ENCODE measurements at regions of chr12 and their contacts with region 1.

Region 1: GRCh38 chr12:69359531-69360347 is at the start of gene YEATS4:
- DNase-seq: peak; percentile 95
- ATAC-seq: peak; percentile 90
- H3K4me3 ChIP-seq: peak within 1 kb of the TSS; percentile 71 to 75 (median 72)
- H3K27ac ChIP-seq: peak within 1 kb of the TSS; percentile 94
- H3K4me1 ChIP-seq: peaks cover 44% of the 10 kb centered on the region
- H3K27me3 ChIP-seq: no peaks in the 10 kb centered on the region
- CTCF ChIP-seq: no peak
- EP300 ChIP-seq: 0 out of 4 replicates have a peak, but pooled peaks of 1 of the 2 experiments have one; percentile 8
- POLR2A ChIP-seq: peak; percentile 76 to 86
- RAD21 ChIP-seq: peak; percentile 39; the same call in 1 of the 2 replicates
- total RNA-seq, gene YEATS4: 45.0 and 51.7 TPM in 2 replicates

Region 2: GRCh38 chr12:68807576-68808387 is 552.0 kb before region 1 on chr12 and contains the start of gene MDM2:
- CTCF ChIA-PET with region 1: no interaction called
- POLR2A ChIA-PET with region 1: no interaction called
- in situ Hi-C with region 1: no loop called
- intact Hi-C with region 1: no loop called
- DNase-seq: peak; percentile 90
- ATAC-seq: peak; percentile 73
- H3K4me3 ChIP-seq: peak within 1 kb of the TSS; percentile 82 to 94 (median 88)
- H3K27ac ChIP-seq: peak within 1 kb of the TSS; percentile 99
- H3K4me1 ChIP-seq: peaks cover 27% of the 10 kb centered on the region
- H3K27me3 ChIP-seq: peaks cover 0 to 5% of the 10 kb centered on the region in 2 experiments; a peak in 1 of 5 replicates
- CTCF ChIP-seq: peak; percentile 86
- EP300 ChIP-seq: peak in 1 of 2 experiments; percentile 40; a peak in 2 of 4 replicates
- POLR2A ChIP-seq: peak; percentile 66 to 80; a peak in 3 of 4 replicates
- RAD21 ChIP-seq: peak; percentile 69
- total RNA-seq, gene MDM2: 314 and 466 TPM in 2 replicates

Region 3: GRCh38 chr12:69290545-69291277 is 69.0 kb before region 1 on chr12:
- CTCF ChIA-PET with region 1: interaction called, 7 read pairs
- POLR2A ChIA-PET with region 1: no interaction called
- in situ Hi-C with region 1: loop called (anchors 10 kb)
- intact Hi-C with region 1: loop called (anchors 1 kb)
- DNase-seq: peak; percentile 82
- ATAC-seq: peak; percentile 99
- H3K4me3 ChIP-seq: no peak overlapping the region
- H3K27ac ChIP-seq: no peak overlapping the region
- H3K4me1 ChIP-seq: peaks cover 11% of the 10 kb centered on the region
- H3K27me3 ChIP-seq: no peaks in the 10 kb centered on the region; a peak in 1 of 5 replicates
- CTCF ChIP-seq: peak; percentile 97
- EP300 ChIP-seq: no peak
- POLR2A ChIP-seq: no peak
- RAD21 ChIP-seq: peak; percentile 92

Region 4: GRCh38 chr12:69348162-69348938 is 11.4 kb before region 1 on chr12 and contains the start of gene LYZ:
- CTCF ChIA-PET with region 1: no interaction called
- POLR2A ChIA-PET with region 1: interaction called, 15 read pairs
- in situ Hi-C with region 1: no loop called
- intact Hi-C with region 1: no loop called
- DNase-seq: peak; percentile 94
- ATAC-seq: peak; percentile 99
- H3K4me3 ChIP-seq: peak within 1 kb of the TSS; percentile 69 to 90 (median 72)
- H3K27ac ChIP-seq: peak within 1 kb of the TSS; percentile 92
- H3K4me1 ChIP-seq: peaks cover 65% of the 10 kb centered on the region
- H3K27me3 ChIP-seq: no peaks in the 10 kb centered on the region; a peak in 1 of 5 replicates
- CTCF ChIP-seq: peak; percentile 24; the same call in 1 of the 2 replicates
- EP300 ChIP-seq: peak in 1 of 2 experiments; percentile 98; a peak in 2 of 4 replicates
- POLR2A ChIP-seq: peak; percentile 84 to 95
- RAD21 ChIP-seq: no peak
- total RNA-seq, gene LYZ: 1,312 and 2,054 TPM in 2 replicates

Region 5: DNA sequence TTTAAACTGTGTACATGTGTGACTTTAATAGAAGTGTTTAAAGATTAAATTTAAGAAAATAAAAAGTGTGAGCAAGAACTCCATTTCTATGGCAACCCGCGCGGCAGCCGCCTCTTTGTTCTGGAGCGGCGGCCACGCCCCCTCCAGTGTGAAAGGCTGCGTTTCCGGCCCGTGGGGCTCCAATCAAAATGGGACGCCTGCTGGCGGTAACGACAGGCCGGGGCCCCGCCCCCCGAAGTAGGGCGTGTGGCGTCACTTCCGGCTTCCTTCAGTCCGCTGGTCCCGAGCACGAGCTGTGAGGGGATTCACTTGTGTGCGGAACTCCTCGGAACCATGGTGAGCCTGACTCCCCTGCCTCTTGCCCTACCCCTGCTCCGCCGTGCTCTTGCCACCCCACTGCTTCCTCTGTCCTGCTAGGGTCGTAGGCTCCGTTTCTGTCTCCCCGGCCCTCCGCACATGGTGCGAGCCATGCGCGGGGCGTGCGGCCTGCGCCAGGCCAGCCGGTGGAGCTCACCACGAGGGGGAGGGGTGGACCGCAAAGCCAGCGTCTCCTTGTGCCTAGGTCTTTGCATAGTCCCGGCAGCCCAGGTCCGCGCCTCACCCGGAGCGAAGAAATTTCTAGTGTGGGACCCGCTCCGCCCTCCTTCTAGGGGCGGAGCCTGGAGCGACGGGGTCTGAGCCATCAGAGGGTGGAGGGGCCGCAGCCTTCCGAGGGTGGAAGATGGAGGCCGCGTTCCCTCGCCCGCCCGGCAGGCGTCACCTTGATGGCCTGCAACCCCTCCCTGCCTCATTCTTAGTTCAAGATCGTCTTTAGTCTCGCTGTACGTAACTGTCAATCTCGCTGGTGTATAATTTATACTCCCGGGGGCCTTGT is 225.7 kb after region 1 on chr12 and contains the start of gene CCT2:
- CTCF ChIA-PET with region 1: no interaction called
- POLR2A ChIA-PET with region 1: no interaction called
- in situ Hi-C with region 1: no loop called
- intact Hi-C with region 1: loop called (anchors 5 kb)
- DNase-seq: peak; percentile 90
- ATAC-seq: peak; percentile 94
- H3K4me3 ChIP-seq: peak within 1 kb of the TSS; percentile 89 to 100 (median 94)
- H3K27ac ChIP-seq: peak within 1 kb of the TSS; percentile 93
- H3K4me1 ChIP-seq: peaks cover 15% of the 10 kb centered on the region
- H3K27me3 ChIP-seq: no peaks in the 10 kb centered on the region; a peak in 1 of 5 replicates
- CTCF ChIP-seq: no peak; the same call in none of the 2 replicates
- EP300 ChIP-seq: no peak
- POLR2A ChIP-seq: peak; percentile 99
- RAD21 ChIP-seq: no peak; the same call in none of the 2 replicates
- total RNA-seq, gene CCT2: 388 and 601 TPM in 2 replicates

Region 6: DNA sequence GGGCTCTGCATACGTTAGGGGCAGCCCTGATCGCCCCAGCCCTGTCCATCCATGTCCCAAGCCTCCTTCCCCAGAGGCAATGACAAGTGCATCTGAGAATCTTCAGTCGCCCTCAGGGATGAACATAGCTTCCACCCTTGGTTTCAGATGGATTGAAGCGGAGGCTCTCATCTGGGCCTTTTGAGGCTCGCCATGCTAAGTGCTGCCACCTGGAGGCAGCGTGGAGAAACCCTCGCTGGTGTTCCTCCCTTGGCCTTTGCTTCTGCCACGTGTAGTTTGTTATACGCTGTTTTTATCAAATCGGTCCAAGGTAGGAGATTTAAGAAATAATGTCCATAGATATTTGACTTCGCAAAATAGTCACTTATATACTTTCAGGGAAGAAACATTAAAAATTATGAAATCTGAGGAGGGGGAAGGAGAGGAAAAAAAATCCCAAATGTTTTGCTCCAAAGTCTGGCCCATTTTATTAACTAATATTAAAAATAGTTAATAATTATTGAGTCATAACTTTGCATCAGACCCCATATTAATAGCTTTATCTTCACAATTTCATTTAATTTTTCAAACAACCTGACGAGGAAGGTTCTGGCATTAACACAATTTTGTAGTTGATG is 279.8 kb after region 1 on chr12:
- CTCF ChIA-PET with region 1: interaction called, 9 read pairs
- POLR2A ChIA-PET with region 1: interaction called, 3 read pairs
- in situ Hi-C with region 1: no loop called
- intact Hi-C with region 1: loop called (anchors 1 kb)
- DNase-seq: peak; percentile 52
- ATAC-seq: peak; percentile 91
- H3K4me3 ChIP-seq: no peak overlapping the region
- H3K27ac ChIP-seq: no peak overlapping the region
- H3K4me1 ChIP-seq: peaks cover 7% of the 10 kb centered on the region; the same call in 1 of the 2 replicates
- H3K27me3 ChIP-seq: peaks cover 0 to 11% of the 10 kb centered on the region in 2 experiments; a peak in 1 of 5 replicates
- CTCF ChIP-seq: peak; percentile 89
- EP300 ChIP-seq: no peak
- POLR2A ChIP-seq: no peak
- RAD21 ChIP-seq: peak; percentile 30; the same call in 1 of the 2 replicates